Aorta (tissue), 5 donors: ENCODE measurements at regions of chr1 and their contacts with region 1.

Region 1: DNA sequence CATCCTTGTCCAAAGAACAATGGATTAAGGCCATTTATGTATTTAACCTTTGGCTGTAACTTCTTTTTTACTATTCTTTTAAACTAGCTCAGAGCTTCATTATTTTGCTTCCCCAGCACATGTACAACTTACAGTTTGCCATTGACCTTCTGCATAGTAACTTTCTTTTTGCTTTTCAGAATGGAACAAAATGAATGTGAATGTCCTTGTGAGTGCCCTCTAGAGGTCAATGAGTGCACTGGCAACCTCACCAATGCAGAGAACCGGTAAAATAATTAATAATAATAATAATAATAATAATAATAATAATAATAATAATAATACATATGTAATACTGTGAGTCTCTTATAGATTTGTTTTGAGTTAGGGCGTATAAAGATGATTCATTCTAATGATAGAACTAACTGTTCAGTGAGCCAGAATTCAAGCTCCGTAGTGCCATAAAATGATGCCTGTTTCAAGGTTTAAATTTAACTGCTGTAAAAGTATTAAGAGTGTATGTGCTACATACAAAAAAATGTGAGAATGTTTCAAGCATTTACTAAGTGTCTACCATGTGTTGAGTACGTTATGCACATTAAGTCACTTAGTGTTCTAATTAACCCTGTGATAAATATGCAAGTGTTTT is 69.0 kb upstream of the RAVER2 start:
- DNase-seq: no peak
- ATAC-seq: no peak
- H3K4me3 ChIP-seq: no peak overlapping the region
- H3K27ac ChIP-seq: no peak overlapping the region
- H3K4me1 ChIP-seq: peaks cover 0 to 2% of the 10 kb centered on the region in 2 donors
- H3K27me3 ChIP-seq: no peaks in the 10 kb centered on the region

Region 2: DNA sequence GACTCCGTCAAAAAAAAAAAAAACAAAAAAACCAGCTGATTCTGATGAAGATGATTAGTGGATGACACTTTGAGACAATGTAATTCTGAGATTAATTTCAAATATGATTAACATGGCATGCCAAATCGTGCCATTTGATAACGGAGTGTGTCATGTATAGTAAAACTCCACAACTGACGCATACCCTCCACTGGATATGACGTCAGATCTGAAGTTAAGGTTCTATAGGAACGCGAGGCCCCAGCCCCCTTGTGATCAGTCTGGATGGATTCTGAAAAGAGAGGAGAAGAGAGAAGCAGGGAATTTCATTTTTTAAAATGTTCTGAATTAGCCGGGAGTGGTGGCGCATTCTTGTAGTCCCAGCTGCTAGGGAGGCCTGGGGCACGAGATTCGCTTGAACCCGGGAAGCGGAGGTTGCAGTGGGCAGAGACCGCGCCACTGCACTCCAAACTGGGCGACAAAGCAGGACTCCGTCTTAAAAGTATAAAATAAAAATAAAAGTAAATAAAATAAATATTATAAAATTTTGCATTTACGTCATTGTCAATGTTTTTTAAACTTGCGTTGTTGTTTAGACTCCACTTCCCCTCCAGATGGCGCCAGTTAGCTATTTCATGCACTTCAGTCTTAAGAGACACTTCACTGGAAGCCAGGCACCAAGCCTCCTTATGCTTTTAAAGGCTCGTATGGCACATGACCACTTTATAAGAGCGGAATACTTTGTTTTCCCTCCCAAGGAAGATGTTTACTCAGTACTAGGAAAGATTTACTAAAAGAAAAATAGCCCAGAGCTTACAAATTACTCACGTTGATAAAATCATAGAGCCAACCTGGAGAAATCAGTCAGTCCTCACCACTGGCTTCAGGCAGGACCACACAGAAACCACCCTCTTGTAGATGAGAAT is 406.9 kb before region 1 on chr1:
- intact Hi-C with region 1: loop called (anchors 5 kb)
- DNase-seq: peak; percentile 72 to 78
- ATAC-seq: peak; percentile 85
- H3K4me3 ChIP-seq: no peak overlapping the region
- H3K27ac ChIP-seq: no peak overlapping the region
- H3K4me1 ChIP-seq: no peaks in the 10 kb centered on the region
- H3K27me3 ChIP-seq: no peaks in the 10 kb centered on the region

Region 3: GRCh38 chr1:64469977-64470664 is 205.7 kb before region 1 on chr1 and contains the start of gene CACHD1:
- intact Hi-C with region 1: loop called in 1 of 2 experiments (anchors 5 kb)
- DNase-seq: peak; percentile 85 to 92
- ATAC-seq: peak; percentile 90
- H3K4me3 ChIP-seq: peak within 1 kb of the TSS; percentile 85 to 87
- H3K27ac ChIP-seq: peak within 1 kb of the TSS; percentile 1 to 50
- H3K4me1 ChIP-seq: no peaks in the 10 kb centered on the region
- H3K27me3 ChIP-seq: no peaks in the 10 kb centered on the region
- total RNA-seq, gene CACHD1: 7.7 to 26.5 TPM

Region 4: GRCh38 chr1:64810001-64810400 is 134.2 kb after region 1 on chr1:
- intact Hi-C with region 1: no loop called
- DNase-seq: no peak
- ATAC-seq: no peak
- H3K4me3 ChIP-seq: no peak overlapping the region
- H3K27ac ChIP-seq: no peak overlapping the region
- H3K4me1 ChIP-seq: no peaks in the 10 kb centered on the region
- H3K27me3 ChIP-seq: no peaks in the 10 kb centered on the region